ENCODE measurements at regions of chr6 and their contacts with region 1.

Region 1: GRCh38 chr6:21309807-21310221 is 283.7 kb upstream of the SOX4 start:
- DNase-seq: no peak
- H3K4me3 ChIP-seq: no peak overlapping the region
- H3K27ac ChIP-seq: no peak overlapping the region
- H3K4me1 ChIP-seq: no peaks in the 10 kb centered on the region
- H3K27me3 ChIP-seq: no peaks in the 10 kb centered on the region
- CTCF ChIP-seq: no peak
- EP300 ChIP-seq: no peak
- POLR2A ChIP-seq: no peak

Region 2: DNA sequence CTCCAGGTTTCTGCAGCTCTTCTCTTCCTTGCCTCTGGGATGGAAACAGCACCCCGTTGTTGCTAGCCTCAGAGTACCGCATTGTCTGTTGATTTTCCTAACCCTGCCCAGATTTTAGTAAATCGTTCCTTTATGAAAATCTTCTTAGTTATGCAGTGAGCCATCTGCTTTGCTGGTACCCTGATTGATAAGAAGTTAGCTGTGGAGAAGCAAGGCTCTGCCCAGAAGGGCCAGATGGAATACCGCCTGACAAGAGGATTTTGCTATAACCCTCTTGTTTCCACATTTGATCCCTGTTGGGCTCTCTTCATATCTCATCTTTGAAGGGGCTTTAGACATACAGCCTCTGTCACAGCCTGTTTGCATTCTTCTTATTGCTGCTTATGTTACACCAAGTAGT is 546.5 kb before region 1 on chr6:
- intact Hi-C with region 1: loop called in 1 of 4 experiments (anchors 10 kb)
- DNase-seq: no peak
- H3K4me3 ChIP-seq: no peak overlapping the region
- H3K27ac ChIP-seq: no peak overlapping the region
- H3K4me1 ChIP-seq: no peaks in the 10 kb centered on the region
- H3K27me3 ChIP-seq: no peaks in the 10 kb centered on the region
- CTCF ChIP-seq: no peak
- EP300 ChIP-seq: no peak
- POLR2A ChIP-seq: no peak

Region 3: GRCh38 chr6:20933057-20933788 is 376.6 kb before region 1 on chr6:
- intact Hi-C with region 1: no loop called
- DNase-seq: no peak
- H3K4me3 ChIP-seq: no peak overlapping the region
- H3K27ac ChIP-seq: no peak overlapping the region
- H3K4me1 ChIP-seq: peaks cover 1% of the 10 kb centered on the region
- H3K27me3 ChIP-seq: no peaks in the 10 kb centered on the region
- CTCF ChIP-seq: no peak
- EP300 ChIP-seq: no peak
- POLR2A ChIP-seq: no peak

Measured in ovary (tissue), 10 donors.